Naive thymus-derived CD8-positive, alpha-beta T cell (primary cell): ENCODE measurements at regions of chr5 and their contacts with region 1.

Region 1: DNA sequence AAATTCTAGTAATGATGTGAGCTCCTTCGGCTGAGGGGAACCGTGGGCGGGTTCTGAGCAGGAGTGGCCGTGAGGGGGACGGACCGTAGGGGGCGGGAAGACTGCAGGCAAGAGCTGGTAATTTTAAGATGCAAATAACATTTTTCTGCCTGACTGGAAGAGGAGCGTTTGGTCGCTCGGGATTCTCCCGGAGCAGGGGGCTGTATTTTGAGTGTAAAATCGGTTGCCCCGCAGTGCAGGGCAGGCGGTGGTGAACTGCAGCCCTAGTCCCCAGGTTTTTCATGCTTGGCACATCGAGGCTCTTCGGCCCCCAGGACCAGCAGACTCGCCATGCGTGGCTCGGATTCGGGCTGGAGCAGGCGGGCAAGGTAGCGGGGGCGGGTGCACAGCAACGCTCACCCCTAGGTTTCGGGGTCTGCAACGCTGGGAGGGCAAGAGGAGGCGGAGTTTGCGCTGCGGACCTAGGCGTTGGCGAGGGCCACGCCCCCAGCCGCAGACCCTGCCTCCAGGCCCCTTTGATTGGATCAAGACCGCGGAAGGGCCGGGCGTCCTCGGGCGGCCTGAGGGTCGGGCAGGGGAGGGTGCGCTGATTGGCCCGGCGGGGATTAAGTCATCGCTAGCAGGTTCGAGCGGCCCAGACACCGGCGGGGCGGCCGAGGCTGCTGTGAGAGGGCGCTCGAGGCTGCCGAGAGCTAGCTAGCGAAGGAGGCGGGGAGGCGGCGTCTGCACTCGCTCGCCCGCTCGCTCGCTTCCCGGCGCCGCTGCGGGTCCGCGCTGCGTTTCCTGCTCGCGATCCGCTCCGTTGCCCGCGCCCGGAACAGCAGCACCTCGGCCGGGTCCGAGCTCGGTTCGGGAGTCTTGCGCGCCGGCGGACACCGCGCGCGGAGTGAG is at the start of gene ARHGAP26:
- DNase-seq: peak; percentile 88 to 95 (median 90)
- ATAC-seq: peak; percentile 86 to 89
- H3K4me3 Mint-ChIP-seq: peak within 1 kb of the TSS; percentile 90 to 99 (median 96)
- H3K27ac Mint-ChIP-seq: peak within 1 kb of the TSS; percentile 87 to 98 (median 94)
- H3K4me1 Mint-ChIP-seq: peaks cover 22 to 51% (median 42%) of the 10 kb centered on the region in 4 donors
- H3K27me3 Mint-ChIP-seq: no peaks in the 10 kb centered on the region
- polyA plus RNA-seq, gene ARHGAP26: 9.1 to 15.7 (median 11.6) TPM

Region 2: DNA sequence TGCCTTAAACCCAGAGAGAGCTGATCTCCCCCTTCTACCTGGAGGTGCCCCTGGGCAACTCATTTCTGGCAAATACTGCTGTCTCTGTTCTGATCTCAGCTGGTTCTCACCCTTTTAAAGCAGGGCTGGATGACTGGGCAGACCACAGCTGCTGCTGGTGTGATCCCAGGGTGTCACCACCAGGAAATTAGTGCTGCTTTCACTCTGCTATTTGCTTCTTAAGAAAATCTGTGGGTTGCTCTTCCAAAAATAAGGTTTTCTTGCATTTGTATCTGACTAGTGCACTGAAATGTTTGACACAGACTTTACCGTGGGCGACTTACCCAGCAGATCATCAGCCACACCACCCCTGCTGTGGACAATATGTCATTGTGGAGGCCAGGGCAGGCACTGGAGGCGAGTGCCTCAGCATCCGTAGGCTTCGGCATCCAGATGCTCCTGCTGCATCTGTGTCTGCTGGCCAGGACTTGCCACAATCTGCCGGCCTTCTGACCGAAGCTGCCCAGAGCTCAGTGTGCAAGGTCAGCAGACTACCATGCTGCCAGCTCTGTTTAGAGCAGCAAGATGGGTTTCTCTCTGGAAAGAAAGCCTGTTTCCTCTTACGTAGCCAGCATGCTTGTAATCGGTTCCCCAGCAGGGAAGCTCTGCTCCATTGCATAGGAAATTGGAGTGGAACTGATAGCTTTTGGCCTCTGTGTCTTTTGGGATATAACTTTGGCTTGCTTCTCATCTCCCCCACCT is 13.8 kb after region 1 on chr5:
- POLR2A ChIA-PET with region 1: interaction called, 14 read pairs
- DNase-seq: no peak
- ATAC-seq: peak; percentile 35 to 44
- H3K4me3 Mint-ChIP-seq: peak overlapping the region in 7 of 10 donors; percentile 28 to 81 (median 48)
- H3K27ac Mint-ChIP-seq: peak overlapping the region; percentile 20 to 88 (median 65)
- H3K4me1 Mint-ChIP-seq: peaks cover 32 to 84% (median 74%) of the 10 kb centered on the region in 4 donors
- H3K27me3 Mint-ChIP-seq: no peaks in the 10 kb centered on the region

Region 3: GRCh38 chr5:142800776-142801494 is 30.9 kb after region 1 on chr5:
- POLR2A ChIA-PET with region 1: interaction called, 78 read pairs
- DNase-seq: peak in 9 of 10 donors; percentile 19 to 74 (median 53)
- ATAC-seq: peak; percentile 81 to 82
- H3K4me3 Mint-ChIP-seq: peak overlapping the region; percentile 68 to 90 (median 82)
- H3K27ac Mint-ChIP-seq: peak overlapping the region; percentile 91 to 98 (median 95)
- H3K4me1 Mint-ChIP-seq: peaks cover 42 to 86% (median 69%) of the 10 kb centered on the region in 4 donors
- H3K27me3 Mint-ChIP-seq: no peaks in the 10 kb centered on the region

Region 4: GRCh38 chr5:142813781-142814498 is 44.0 kb after region 1 on chr5:
- POLR2A ChIA-PET with region 1: no interaction called
- DNase-seq: no peak
- ATAC-seq: no peak
- H3K4me3 Mint-ChIP-seq: no peak overlapping the region
- H3K27ac Mint-ChIP-seq: peak overlapping the region in 1 of 10 donors; percentile 6
- H3K4me1 Mint-ChIP-seq: peaks cover 30 to 63% (median 56%) of the 10 kb centered on the region in 4 donors
- H3K27me3 Mint-ChIP-seq: no peaks in the 10 kb centered on the region

Region 5: DNA sequence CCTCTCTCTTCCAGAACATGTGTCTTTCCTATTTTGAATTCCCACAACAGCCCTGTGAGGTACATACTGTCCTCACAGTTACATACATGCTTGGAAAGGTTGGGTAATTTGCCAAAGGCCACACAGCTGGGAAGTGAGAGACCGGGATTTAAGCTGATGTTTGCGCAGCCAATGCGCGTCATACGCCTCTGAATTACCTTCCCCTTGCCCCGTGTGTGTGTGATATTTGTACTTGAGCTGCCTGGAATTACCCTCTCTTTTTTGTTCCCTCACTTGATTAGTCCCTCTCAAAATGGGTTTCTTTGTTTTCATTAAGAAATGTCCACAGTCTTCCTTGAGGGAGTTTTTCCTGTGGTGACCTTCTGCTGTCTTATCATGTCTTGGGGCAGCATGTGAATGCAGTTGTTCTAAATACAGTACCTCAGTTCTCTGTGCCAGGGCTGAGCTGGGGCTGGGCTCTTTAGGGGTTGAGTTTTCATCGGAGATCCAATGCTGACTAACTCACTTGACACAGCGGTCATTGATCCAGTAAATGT is 94.8 kb after region 1 on chr5:
- POLR2A ChIA-PET with region 1: interaction called, 22 read pairs
- DNase-seq: no peak
- ATAC-seq: no peak
- H3K4me3 Mint-ChIP-seq: peak overlapping the region in 2 of 10 donors; percentile 50 to 65
- H3K27ac Mint-ChIP-seq: peak overlapping the region; percentile 61 to 93 (median 87)
- H3K4me1 Mint-ChIP-seq: peaks cover 33 to 64% (median 57%) of the 10 kb centered on the region in 4 donors
- H3K27me3 Mint-ChIP-seq: no peaks in the 10 kb centered on the region

Region 6: DNA sequence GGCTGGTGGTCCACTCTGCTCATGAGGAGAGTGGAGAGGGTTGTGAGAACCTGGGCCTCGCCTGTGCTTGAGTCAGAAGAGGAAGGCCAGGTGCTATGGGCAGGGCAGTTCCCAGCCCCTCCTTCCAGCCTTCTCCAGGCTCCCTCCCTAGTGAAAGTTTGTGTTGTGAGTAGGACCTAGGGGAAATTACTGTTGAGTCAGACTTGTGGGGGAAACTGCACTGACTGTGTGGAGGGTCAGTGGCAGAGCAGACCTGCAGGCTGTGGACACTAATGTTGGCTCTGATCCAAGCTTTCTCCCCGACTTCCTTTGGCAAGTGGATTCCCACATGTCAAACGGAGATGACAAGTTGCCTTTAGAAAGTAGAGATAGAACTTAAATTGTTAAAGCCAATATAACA is 102.8 kb after region 1 on chr5:
- POLR2A ChIA-PET with region 1: interaction called, 22 read pairs
- DNase-seq: no peak
- ATAC-seq: no peak
- H3K4me3 Mint-ChIP-seq: no peak overlapping the region
- H3K27ac Mint-ChIP-seq: peak overlapping the region in 1 of 10 donors; percentile 37
- H3K4me1 Mint-ChIP-seq: peaks cover 13 to 26% (median 18%) of the 10 kb centered on the region in 4 donors
- H3K27me3 Mint-ChIP-seq: no peaks in the 10 kb centered on the region